GM23248 (cell line): ENCODE measurements at regions of chr18 and their contacts with region 1.

Region 1: DNA sequence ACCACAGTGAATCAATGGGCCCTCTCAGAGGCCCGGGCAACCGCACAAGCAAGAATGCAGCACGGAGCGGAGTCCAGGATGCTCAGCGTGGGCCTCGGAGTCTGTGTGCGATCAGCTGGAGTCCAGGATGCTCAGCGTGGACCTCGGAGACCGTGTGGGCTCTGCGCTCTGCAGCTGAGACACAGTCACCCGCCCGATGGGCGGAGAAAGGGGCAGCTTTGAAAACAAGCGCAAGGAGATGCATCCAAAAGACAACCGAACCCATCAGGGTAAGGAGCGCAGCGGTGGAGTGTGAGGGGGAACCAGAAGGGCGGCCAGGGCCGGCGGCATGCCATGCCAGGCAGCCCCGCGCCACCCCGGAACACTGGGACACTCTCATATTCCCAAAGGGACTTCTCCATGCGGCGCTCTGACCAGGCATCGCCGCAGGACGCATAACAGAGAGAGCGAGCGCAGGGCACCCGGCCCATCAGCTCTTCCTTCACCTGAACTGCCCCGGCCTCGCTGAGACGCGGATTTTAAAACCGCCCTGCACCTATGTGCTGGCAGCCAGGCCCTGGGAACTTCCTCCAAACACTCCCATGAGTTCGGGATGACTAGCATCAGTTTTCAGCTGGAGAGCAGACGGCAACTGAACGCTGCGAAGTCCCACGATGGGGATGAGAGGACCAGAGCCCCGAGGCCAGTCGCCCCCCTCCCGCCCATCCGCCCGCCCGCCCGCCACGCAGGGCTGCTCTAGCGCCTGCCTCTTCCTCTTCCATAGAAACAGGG is 44.7 kb downstream of the MC5R start:
- DNase-seq: no peak
- H3K4me3 ChIP-seq: no peak overlapping the region
- H3K27ac ChIP-seq: no peak overlapping the region
- H3K4me1 ChIP-seq: no peaks in the 10 kb centered on the region
- H3K27me3 ChIP-seq: peaks cover 14% of the 10 kb centered on the region

Region 2: GRCh38 chr18:13762690-13763439 is 105.8 kb before region 1 on chr18:
- in situ Hi-C with region 1: loop called (anchors 25 kb)
- DNase-seq: no peak
- H3K4me3 ChIP-seq: no peak overlapping the region
- H3K27ac ChIP-seq: no peak overlapping the region
- H3K4me1 ChIP-seq: no peaks in the 10 kb centered on the region
- H3K27me3 ChIP-seq: no peaks in the 10 kb centered on the region